ENCODE measurements at regions of chr6 and their contacts with region 1.

Region 1: DNA sequence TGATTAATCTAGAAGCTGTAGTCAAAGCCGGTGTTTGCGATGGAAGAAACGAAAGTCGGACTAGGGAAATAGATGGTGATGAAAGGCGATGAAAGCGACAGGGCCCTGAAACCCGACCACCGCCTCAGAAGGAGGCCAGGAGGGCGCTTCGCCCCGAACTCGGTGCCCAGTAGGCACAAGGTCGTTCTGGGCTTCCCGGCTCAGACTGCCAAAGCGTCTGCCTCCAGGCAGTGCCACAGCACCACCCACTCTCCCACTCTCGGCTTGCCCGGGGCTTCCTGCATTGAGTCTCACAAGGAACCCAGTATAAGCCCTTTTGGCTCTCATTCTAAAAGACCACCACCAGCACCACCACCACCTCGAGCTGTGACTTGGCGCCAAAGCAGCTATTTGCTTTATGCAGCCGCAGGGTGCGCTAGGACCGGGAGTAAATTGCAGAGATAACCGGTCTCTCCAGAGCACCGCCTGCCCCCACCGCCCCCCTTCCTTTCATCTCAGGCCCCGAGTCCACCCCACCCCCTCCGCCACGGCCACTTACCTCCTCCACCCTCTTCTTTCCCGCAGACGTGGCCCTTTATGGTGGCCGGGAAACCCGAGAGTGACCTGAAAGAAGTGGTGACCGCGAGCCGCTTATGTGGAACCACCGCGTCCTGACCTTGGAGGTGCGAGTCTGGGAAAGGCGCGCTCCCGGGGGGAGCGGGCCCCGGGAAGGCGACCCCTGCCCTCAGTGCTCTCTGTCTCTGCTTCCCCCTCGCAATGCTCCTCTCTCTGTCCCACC is 2.4 kb downstream of the TCF21 start:
- DNase-seq: no peak
- H3K4me3 ChIP-seq: no peak overlapping the region
- H3K27ac ChIP-seq: no peak overlapping the region
- H3K4me1 ChIP-seq: no peaks in the 10 kb centered on the region
- H3K27me3 ChIP-seq: peaks cover 94% of the 10 kb centered on the region
- CTCF ChIP-seq: no peak

Region 2: DNA sequence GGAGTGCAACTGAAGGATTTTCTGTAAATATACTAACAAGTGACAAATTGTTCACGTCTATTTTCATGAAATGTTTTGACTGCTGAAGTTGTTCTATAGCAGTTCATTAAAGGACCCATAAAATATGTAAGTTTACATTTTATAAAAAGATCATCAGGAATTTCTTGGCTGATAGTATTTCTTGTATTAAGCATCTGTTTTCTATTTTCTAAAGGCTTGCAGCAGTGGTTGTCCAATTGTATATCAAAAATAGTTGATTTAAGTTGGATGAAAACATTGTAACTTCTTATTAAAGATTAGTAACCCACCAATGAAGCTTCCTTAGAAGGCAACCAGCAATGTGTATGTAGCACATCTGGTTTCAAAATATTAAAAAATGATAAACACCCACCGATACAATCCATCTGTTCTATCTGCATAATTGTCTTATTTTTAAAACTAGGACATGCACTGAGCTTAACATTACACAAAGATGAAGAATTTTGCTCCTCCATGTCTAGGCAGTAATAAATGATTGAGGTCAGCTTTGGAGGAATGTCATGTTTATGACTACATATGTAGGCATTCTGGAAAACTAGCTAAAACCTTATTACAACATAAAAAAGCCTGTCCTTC is 303.7 kb before region 1 on chr6:
- dilution Hi-C with region 1: loop called (anchors 25 kb)
- DNase-seq: no peak
- H3K4me3 ChIP-seq: no peak overlapping the region
- H3K27ac ChIP-seq: no peak overlapping the region
- H3K4me1 ChIP-seq: peaks cover 17% of the 10 kb centered on the region
- H3K27me3 ChIP-seq: no peaks in the 10 kb centered on the region
- CTCF ChIP-seq: no peak

Region 3: DNA sequence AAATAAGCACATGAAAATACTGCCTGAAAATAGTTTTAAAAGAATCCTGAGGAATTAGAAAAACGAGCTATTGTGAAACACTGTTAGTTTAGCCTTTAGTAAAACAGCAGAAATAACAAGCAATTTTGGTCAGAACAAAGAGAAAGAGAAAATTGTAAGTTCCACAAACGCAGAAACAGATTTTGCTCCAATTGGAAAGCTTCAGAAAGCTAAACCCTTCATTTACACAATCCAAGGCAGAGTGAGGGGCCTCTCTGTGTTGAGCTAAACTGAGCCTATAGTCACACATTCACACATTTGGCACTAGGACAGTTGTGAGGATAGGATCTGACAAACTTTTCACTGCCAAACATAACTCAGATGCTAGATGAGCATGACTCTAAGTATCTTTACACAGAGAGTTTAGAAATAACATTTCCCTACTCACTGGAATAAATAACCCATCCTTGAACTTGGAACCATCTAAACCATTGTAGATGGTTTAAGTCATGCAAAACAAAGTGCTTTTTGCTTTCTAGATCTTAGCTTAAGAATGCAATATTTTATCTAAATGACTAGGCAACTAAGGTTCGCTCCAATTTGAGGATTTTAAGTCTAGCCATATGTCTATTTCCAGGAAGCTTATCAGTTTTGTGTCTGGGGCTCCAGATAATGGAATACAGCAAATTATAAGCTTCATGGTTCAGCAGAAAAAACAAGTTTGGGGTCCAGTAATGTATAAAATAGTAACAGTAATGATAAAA is 304.0 kb after region 1 on chr6:
- dilution Hi-C with region 1: no loop called
- DNase-seq: no peak
- H3K4me3 ChIP-seq: no peak overlapping the region
- H3K27ac ChIP-seq: no peak overlapping the region
- H3K4me1 ChIP-seq: no peaks in the 10 kb centered on the region
- H3K27me3 ChIP-seq: no peaks in the 10 kb centered on the region
- CTCF ChIP-seq: no peak

Measured in keratinocyte (primary cell).